GM12878 (cell line): ENCODE measurements at regions of chr5 and their contacts with region 1.

Region 1: DNA sequence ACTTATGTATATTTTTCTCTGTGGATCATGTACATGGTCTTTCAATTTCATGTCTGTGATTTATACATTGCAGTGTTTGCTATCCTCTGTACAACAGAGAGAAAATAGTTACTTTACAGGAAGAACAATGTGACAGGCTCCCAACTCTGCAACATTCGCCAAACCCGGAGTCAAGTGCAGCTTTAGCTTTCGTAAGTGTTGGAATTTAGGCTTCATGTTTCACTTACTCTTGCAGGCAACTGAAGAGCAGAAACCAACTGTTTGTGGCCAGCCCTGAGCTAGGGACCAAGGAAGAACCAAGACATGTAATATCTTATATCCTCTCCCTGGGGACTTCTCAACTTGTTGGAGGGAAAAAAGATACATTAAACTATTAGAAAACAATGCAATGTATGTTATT is 147.9 kb downstream of the C5orf15 start:
- DNase-seq: no peak
- ATAC-seq: no peak
- H3K4me3 ChIP-seq: no peak overlapping the region
- H3K27ac ChIP-seq: no peak overlapping the region
- H3K4me1 ChIP-seq: peaks cover 20% of the 10 kb centered on the region
- H3K27me3 ChIP-seq: no peaks in the 10 kb centered on the region
- CTCF ChIP-seq: no peak
- EP300 ChIP-seq: no peak
- POLR2A ChIP-seq: no peak
- RAD21 ChIP-seq: no peak

Region 2: GRCh38 chr5:133664402-133664801 is 156.1 kb before region 1 on chr5:
- CTCF ChIA-PET with region 1: no interaction called
- POLR2A ChIA-PET with region 1: no interaction called
- RAD21 ChIA-PET with region 1: no interaction called
- SMC1A ChIA-PET with region 1: no interaction called
- in situ Hi-C with region 1: no loop called
- intact Hi-C with region 1: no loop called
- DNase-seq: no peak
- ATAC-seq: no peak
- H3K4me3 ChIP-seq: no peak overlapping the region
- H3K27ac ChIP-seq: no peak overlapping the region
- H3K4me1 ChIP-seq: no peaks in the 10 kb centered on the region
- H3K27me3 ChIP-seq: peaks cover 5 to 8% of the 10 kb centered on the region in 2 experiments; a peak in 2 of 4 replicates
- CTCF ChIP-seq: no peak
- EP300 ChIP-seq: no peak
- POLR2A ChIP-seq: no peak
- RAD21 ChIP-seq: no peak

Region 3: DNA sequence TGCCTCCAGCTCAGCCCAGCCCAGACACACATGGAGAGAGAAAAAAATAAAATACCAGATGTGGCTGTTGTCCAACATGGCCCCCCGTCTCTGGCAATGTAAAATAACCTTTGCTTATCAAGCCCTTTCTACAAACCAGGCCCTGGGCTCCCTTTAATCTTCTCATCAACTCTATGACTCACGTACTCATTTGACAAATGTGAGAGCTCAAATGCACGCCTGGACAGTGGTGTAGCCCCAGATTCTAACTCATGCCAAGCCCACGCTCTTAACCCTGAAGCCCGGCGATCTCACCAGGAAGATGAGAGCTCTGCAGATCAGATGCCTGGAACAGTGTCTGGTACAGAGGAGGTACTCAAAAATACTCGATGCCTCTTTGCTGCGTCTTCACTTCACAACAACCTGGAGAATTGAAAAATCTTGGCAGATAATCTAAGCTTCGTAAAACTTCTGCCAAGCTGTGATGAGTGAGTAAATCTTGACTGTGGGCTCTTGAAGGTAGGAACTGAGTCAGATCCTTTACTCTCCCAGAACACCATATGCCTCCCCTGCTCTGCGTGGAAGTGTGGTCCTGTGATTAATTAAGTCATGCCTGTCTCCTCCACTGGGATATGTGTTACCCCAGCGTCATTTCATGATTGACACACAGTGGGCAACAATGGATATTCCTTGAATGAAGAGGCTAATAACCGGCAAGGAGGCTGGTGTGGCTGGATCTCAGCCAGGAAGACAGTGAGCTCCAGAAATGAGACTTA is 106.2 kb before region 1 on chr5:
- CTCF ChIA-PET with region 1: no interaction called
- POLR2A ChIA-PET with region 1: no interaction called
- RAD21 ChIA-PET with region 1: no interaction called
- SMC1A ChIA-PET with region 1: no interaction called
- in situ Hi-C with region 1: no loop called
- intact Hi-C with region 1: no loop called
- DNase-seq: no peak
- ATAC-seq: no peak
- H3K4me3 ChIP-seq: no peak overlapping the region
- H3K27ac ChIP-seq: no peak overlapping the region
- H3K4me1 ChIP-seq: no peaks in the 10 kb centered on the region
- H3K27me3 ChIP-seq: peaks cover 0 to 4% of the 10 kb centered on the region in 2 experiments; a peak in 1 of 4 replicates
- CTCF ChIP-seq: no peak
- EP300 ChIP-seq: no peak
- POLR2A ChIP-seq: no peak
- RAD21 ChIP-seq: no peak

Region 4: GRCh38 chr5:133754575-133755169 is 65.8 kb before region 1 on chr5:
- CTCF ChIA-PET with region 1: interaction called, 8 read pairs
- POLR2A ChIA-PET with region 1: interaction called, 4 read pairs
- RAD21 ChIA-PET with region 1: interaction called, 9 read pairs
- SMC1A ChIA-PET with region 1: interaction called, 19 read pairs
- in situ Hi-C with region 1: no loop called
- intact Hi-C with region 1: no loop called
- DNase-seq: peak; percentile 11
- ATAC-seq: peak; percentile 96
- H3K4me3 ChIP-seq: no peak overlapping the region
- H3K27ac ChIP-seq: no peak overlapping the region
- H3K4me1 ChIP-seq: no peaks in the 10 kb centered on the region
- H3K27me3 ChIP-seq: no peaks in the 10 kb centered on the region; a peak in 3 of 4 replicates
- CTCF ChIP-seq: peak; percentile 63 to 68 (median 65)
- EP300 ChIP-seq: no peak
- POLR2A ChIP-seq: no peak
- RAD21 ChIP-seq: peak; percentile 58

Region 5: DNA sequence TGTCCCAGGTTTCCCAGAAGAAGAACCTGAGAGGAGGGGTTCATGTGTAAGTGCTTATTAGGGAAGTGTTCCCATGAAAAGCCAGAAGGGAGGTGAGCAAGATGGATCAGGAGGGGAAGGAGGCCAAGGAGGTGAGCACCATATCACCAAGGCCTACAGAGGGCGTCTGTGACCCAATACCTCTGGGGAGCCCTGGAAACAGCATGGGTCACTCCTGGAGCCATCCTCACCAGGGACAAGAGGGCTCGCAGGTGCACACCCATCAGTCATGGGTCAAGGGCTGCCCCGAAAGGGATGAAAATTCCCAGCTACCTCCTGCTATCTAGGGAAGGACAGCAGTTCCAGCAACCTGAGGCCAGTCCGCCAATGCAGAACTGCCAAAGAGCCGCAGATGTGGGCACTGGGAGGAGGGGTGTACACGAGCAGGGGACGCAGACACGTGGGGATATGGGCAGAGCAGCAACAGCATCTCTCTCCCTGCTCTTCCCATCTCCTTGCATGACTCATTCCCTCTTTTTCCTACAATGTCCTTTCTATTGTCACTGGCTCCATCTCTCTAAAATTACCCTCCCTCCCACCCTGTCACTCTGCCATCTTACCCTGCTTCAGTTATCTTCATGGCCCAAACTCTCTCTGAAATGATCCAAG is 40.6 kb before region 1 on chr5:
- CTCF ChIA-PET with region 1: interaction called, 10 read pairs
- POLR2A ChIA-PET with region 1: no interaction called
- RAD21 ChIA-PET with region 1: no interaction called
- SMC1A ChIA-PET with region 1: interaction called, 4 read pairs
- in situ Hi-C with region 1: no loop called
- intact Hi-C with region 1: no loop called
- DNase-seq: no peak
- ATAC-seq: peak; percentile 75
- H3K4me3 ChIP-seq: no peak overlapping the region
- H3K27ac ChIP-seq: no peak overlapping the region
- H3K4me1 ChIP-seq: no peaks in the 10 kb centered on the region
- H3K27me3 ChIP-seq: no peaks in the 10 kb centered on the region
- CTCF ChIP-seq: peak; percentile 17 to 34 (median 34); a peak in 4 of 6 replicates
- EP300 ChIP-seq: no peak
- POLR2A ChIP-seq: no peak
- RAD21 ChIP-seq: peak; percentile 45

Region 6: GRCh38 chr5:133831491-133832224 is 11.2 kb after region 1 on chr5:
- CTCF ChIA-PET with region 1: interaction called, 5 read pairs
- POLR2A ChIA-PET with region 1: interaction called, 3 read pairs
- RAD21 ChIA-PET with region 1: interaction called, 9 read pairs
- SMC1A ChIA-PET with region 1: interaction called, 27 read pairs
- in situ Hi-C with region 1: no loop called
- intact Hi-C with region 1: no loop called
- DNase-seq: no peak
- ATAC-seq: peak; percentile 43
- H3K4me3 ChIP-seq: no peak overlapping the region; the same call in 1 of the 2 replicates
- H3K27ac ChIP-seq: no peak overlapping the region
- H3K4me1 ChIP-seq: peaks cover 6% of the 10 kb centered on the region; the same call in 1 of the 2 replicates
- H3K27me3 ChIP-seq: no peaks in the 10 kb centered on the region
- CTCF ChIP-seq: no peak
- EP300 ChIP-seq: no peak
- POLR2A ChIP-seq: no peak
- RAD21 ChIP-seq: no peak

Region 7: DNA sequence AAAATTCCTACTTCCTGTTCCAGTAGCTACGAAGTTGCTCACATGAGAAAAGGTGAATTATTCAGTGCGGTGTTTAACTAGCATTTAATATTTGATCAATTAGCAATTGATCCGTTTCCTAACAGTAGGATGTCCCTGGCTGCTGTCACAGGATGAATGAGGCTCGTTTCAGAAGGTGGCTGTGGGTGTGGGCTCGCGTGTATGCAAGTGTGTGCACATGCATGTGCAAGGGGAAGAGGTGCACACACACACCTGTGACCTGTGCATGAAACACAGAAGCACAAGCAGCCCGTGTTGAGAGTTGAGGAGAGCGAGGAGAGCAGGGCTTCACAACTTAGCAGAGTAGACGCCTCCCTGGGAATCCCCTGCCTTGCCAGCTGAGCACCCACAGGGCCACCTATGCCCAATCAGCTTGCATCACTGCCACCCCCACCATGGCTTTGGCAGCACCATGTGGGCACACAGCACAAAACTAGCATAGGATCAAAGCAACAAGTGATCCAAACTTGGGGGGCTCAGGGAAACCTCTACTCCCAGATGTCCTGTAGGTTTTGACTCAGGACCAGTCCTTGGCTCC is 40.7 kb after region 1 on chr5:
- CTCF ChIA-PET with region 1: interaction called, 77 read pairs
- POLR2A ChIA-PET with region 1: interaction called, 3 read pairs
- RAD21 ChIA-PET with region 1: interaction called, 49 read pairs
- SMC1A ChIA-PET with region 1: interaction called, 20 read pairs
- in situ Hi-C with region 1: no loop called
- intact Hi-C with region 1: no loop called
- DNase-seq: no peak
- ATAC-seq: peak; percentile 93
- H3K4me3 ChIP-seq: no peak overlapping the region
- H3K27ac ChIP-seq: no peak overlapping the region
- H3K4me1 ChIP-seq: peaks cover 4% of the 10 kb centered on the region
- H3K27me3 ChIP-seq: no peaks in the 10 kb centered on the region; a peak in 1 of 4 replicates
- CTCF ChIP-seq: no peak
- EP300 ChIP-seq: no peak
- POLR2A ChIP-seq: no peak
- RAD21 ChIP-seq: no peak

Region 8: GRCh38 chr5:134267366-134268018 is 447.0 kb after region 1 on chr5:
- CTCF ChIA-PET with region 1: no interaction called
- POLR2A ChIA-PET with region 1: no interaction called
- RAD21 ChIA-PET with region 1: no interaction called
- SMC1A ChIA-PET with region 1: no interaction called
- in situ Hi-C with region 1: no loop called
- intact Hi-C with region 1: no loop called
- DNase-seq: no peak
- ATAC-seq: no peak
- H3K4me3 ChIP-seq: no peak overlapping the region
- H3K27ac ChIP-seq: no peak overlapping the region
- H3K4me1 ChIP-seq: no peaks in the 10 kb centered on the region
- H3K27me3 ChIP-seq: no peaks in the 10 kb centered on the region
- CTCF ChIP-seq: no peak
- EP300 ChIP-seq: no peak
- POLR2A ChIP-seq: no peak
- RAD21 ChIP-seq: no peak